Activated T-helper 1 cell treated with anti-CD3 and anti-CD28 coated beads, Interleukin-12 subunit alpha, Interleukin-12 subunit beta, Interleukin-2, Interleukin-4 antibody, amounts not matched to agents 30 ng/mL and 10 ng/mL and 1 ng/mL, durations not matched to agents 14 hours and 24 hours and 36 hours (primary cell): ENCODE measurements at regions of chr1 and their contacts with region 1.

Region 1: DNA sequence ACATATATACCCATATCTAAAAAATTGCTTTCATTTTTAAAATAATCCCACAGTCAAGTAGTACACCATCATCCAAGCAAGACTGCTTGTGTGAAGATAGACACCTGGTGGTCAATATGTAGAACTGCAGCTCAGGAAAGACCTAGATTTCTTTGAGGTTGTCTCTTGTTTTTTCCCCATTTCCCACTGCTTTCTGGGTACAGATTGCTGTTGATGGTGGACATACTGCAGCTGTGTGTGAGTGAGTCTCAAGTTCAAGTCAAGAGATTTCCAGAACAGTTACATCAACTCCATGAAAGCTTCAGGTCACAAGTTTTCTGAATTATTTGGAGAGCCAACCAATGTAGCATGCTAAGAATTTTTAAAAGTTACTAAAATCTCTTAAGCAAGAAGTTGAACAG is 306.4 kb downstream of the DUSP10 start:
- DNase-seq: no peak
- H3K4me3 Mint-ChIP-seq: no peak overlapping the region
- H3K27ac Mint-ChIP-seq: no peak overlapping the region
- H3K4me1 Mint-ChIP-seq: peaks cover 24% of the 10 kb centered on the region
- H3K27me3 Mint-ChIP-seq: peaks cover 2% of the 10 kb centered on the region

Region 2: GRCh38 chr1:220810179-220810653 is 625.3 kb before region 1 on chr1:
- intact Hi-C with region 1: loop called (anchors 1 kb)
- DNase-seq: peak; percentile 55
- H3K4me3 Mint-ChIP-seq: no peak overlapping the region
- H3K27ac Mint-ChIP-seq: no peak overlapping the region
- H3K4me1 Mint-ChIP-seq: peaks cover 9% of the 10 kb centered on the region
- H3K27me3 Mint-ChIP-seq: peaks cover 8% of the 10 kb centered on the region

Region 3: DNA sequence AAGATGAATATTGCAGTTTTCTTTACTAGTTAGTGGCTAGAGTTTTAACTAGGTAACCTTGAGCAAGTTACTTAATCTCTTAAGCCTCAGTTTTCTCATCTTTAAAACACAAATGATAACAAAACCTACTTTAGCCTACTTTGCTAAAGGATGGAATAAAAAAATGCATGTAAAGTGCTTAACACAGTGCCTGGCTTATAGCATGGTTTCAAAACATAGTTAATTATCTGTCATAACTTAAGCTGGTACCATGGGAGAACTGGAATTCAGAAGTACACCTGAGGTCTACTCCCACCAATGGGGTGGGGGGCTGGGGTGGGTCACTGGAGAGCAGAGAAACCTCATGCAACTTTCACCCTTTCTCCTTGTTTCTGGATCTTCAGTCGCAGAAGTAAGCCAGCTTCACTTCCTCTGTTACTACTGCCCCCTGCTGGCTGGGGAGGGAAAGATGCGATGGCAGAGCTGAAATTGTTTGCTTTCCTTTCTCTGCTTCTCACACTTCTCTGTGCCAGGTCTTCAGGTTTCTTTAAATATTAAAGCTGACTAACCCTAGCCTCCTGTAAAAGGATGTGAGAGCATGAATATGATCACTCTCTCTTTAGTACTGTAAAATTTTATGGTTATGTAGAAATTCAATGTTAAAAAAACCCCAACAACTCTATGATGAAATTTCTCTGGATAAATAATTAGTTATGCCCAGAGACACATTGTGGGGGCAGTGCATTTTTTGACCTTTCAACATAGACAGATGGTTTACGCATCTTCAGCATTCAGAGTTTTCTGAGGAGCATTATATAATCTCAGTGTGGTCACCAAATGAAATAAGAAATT is 232.1 kb before region 1 on chr1:
- intact Hi-C with region 1: loop called (anchors 10 kb)
- DNase-seq: peak; percentile 51
- H3K4me3 Mint-ChIP-seq: no peak overlapping the region
- H3K27ac Mint-ChIP-seq: no peak overlapping the region
- H3K4me1 Mint-ChIP-seq: peaks cover 9% of the 10 kb centered on the region
- H3K27me3 Mint-ChIP-seq: peaks cover 2% of the 10 kb centered on the region

Region 4: DNA sequence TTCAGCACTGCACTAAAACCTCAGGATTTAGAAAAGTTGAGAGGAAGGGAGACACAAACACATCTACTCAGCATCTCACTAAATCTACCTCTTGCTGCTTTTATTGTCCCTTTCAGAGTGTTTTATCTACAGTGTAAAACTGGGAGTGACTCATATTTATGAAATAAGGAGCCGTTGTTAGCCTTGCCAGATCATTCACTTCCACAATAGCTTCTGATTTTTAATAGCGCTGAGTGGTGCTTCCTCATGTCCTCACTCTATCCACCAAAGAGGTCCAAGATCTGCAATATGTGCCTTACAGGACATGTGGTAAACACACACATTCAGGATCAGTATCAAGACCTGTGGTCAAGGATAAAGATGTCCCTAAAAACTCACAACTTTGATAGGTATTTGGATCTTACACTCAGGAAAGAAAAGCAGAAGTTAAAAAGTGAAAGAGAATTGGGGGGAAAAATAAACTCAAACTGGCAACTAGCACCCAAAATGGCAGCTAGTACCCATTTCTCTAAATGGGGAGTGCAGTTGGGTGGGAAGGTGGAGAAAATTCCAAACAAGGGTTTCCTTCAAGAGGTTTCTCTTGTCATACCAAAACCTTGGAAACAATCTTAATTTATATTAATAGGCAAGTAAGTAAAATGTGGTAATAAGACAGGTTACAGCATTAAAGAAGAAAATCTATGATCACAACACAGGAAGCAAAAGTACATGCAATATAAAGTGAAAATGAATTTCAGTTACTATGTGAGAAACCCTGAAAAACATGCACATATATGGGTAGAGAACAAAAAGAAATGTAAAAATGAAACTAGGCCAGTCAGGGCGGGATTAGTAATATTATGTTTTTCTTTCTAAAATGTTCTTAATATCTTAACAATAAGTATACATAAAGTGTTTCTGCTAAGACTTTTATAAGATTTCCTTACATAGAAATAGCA is 290.5 kb after region 1 on chr1:
- intact Hi-C with region 1: loop called (anchors 1 kb)
- DNase-seq: no peak
- H3K4me3 Mint-ChIP-seq: peak overlapping the region; percentile 55
- H3K27ac Mint-ChIP-seq: peak overlapping the region; percentile 92
- H3K4me1 Mint-ChIP-seq: peaks cover 87% of the 10 kb centered on the region
- H3K27me3 Mint-ChIP-seq: no peaks in the 10 kb centered on the region

Region 5: GRCh38 chr1:221829327-221830015 is 394.0 kb after region 1 on chr1:
- intact Hi-C with region 1: loop called (anchors 1 kb)
- DNase-seq: peak; percentile 48
- H3K4me3 Mint-ChIP-seq: peak overlapping the region; percentile 73
- H3K27ac Mint-ChIP-seq: peak overlapping the region; percentile 97
- H3K4me1 Mint-ChIP-seq: peaks cover 91% of the 10 kb centered on the region
- H3K27me3 Mint-ChIP-seq: no peaks in the 10 kb centered on the region

Region 6: GRCh38 chr1:222455188-222455879 is 1019.8 kb after region 1 on chr1:
- intact Hi-C with region 1: loop called (anchors 10 kb)
- DNase-seq: peak; percentile 69
- H3K4me3 Mint-ChIP-seq: no peak overlapping the region
- H3K27ac Mint-ChIP-seq: no peak overlapping the region
- H3K4me1 Mint-ChIP-seq: peaks cover 12% of the 10 kb centered on the region
- H3K27me3 Mint-ChIP-seq: peaks cover 3% of the 10 kb centered on the region